Tibial artery (tissue), 4 donors: ENCODE measurements at regions of chr2 and their contacts with region 1.

Region 1: GRCh38 chr2:12594590-12594989 is 122.1 kb upstream of the TRIB2 start:
- DNase-seq: no peak
- H3K4me3 ChIP-seq: no peak overlapping the region
- H3K27ac ChIP-seq: no peak overlapping the region
- H3K4me1 ChIP-seq: peaks cover 0 to 13% (median 6%) of the 10 kb centered on the region in 4 donors
- H3K27me3 ChIP-seq: no peaks in the 10 kb centered on the region
- CTCF ChIP-seq: no peak

Region 2: GRCh38 chr2:12534646-12535263 is 59.8 kb before region 1 on chr2:
- intact Hi-C with region 1: no loop called
- DNase-seq: no peak
- H3K4me3 ChIP-seq: no peak overlapping the region
- H3K27ac ChIP-seq: peak overlapping the region; percentile 44 to 71
- H3K4me1 ChIP-seq: peaks cover 0 to 44% (median 20%) of the 10 kb centered on the region in 4 donors
- H3K27me3 ChIP-seq: no peaks in the 10 kb centered on the region
- CTCF ChIP-seq: no peak

Region 3: GRCh38 chr2:12615509-12615908 is 20.9 kb after region 1 on chr2:
- intact Hi-C with region 1: loop called (anchors 2 kb)
- DNase-seq: no peak
- H3K4me3 ChIP-seq: no peak overlapping the region
- H3K27ac ChIP-seq: no peak overlapping the region
- H3K4me1 ChIP-seq: peaks cover 0 to 16% (median 10%) of the 10 kb centered on the region in 4 donors
- H3K27me3 ChIP-seq: no peaks in the 10 kb centered on the region
- CTCF ChIP-seq: no peak